Activated CD8-positive, alpha-beta memory T cell treated with anti-CD3 and anti-CD28 coated beads, Interleukin-2, amount 10 ng/mL, durations not matched to agents 7 days and 5 days (primary cell): ENCODE measurements at regions of chr15 and their contacts with region 1.

Region 1: GRCh38 chr15:65184868-65185738 is at the start of gene CLPX:
- DNase-seq: peak; percentile 93
- ATAC-seq: peak; percentile 93
- H3K4me3 Mint-ChIP-seq: peak within 1 kb of the TSS; percentile 93
- H3K27ac Mint-ChIP-seq: peak within 1 kb of the TSS; percentile 88
- H3K4me1 Mint-ChIP-seq: peaks cover 23% of the 10 kb centered on the region
- H3K27me3 Mint-ChIP-seq: no peaks in the 10 kb centered on the region
- total RNA-seq, gene CLPX: 46.8 to 58.8 TPM

Region 2: DNA sequence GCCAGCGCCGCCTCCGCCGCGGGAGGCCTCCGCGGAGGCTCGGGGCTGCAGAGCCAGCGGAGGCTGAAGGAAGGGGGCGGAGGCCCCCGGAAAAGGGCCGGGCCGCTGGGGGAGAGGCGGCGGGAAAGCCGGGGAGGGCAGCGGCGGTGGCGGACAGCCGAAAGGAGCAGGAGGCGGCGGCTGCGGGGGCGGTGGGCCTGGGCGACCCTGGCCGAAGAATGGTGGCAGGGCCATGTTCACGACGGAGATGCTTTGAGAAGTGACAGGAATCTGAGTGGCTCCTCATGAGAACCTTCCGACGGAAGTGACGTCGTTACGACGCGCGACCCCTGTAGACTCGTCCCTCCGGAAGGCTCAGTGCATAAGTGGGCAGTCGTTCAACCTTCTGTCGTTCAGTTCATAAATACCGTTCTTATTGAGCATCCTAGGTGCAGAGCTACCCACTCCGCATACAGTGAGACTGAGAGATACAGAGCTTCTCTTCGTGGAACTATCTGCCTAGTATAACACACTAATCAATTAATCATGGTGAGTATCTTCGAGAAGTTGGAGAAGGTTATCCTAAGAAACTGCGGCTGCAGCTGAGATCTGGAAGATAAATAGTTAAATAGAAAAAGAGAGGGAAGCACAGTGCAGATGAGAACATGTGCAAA is 51.4 kb before region 1 on chr15 and contains the start of gene PDCD7:
- CTCF ChIA-PET with region 1: no interaction called
- DNase-seq: peak; percentile 92
- ATAC-seq: peak; percentile 96
- H3K4me3 Mint-ChIP-seq: peak within 1 kb of the TSS; percentile 87
- H3K27ac Mint-ChIP-seq: peak within 1 kb of the TSS; percentile 89
- H3K4me1 Mint-ChIP-seq: peaks cover 27% of the 10 kb centered on the region
- H3K27me3 Mint-ChIP-seq: no peaks in the 10 kb centered on the region
- total RNA-seq, gene PDCD7: 40.0 to 40.2 TPM

Region 3: DNA sequence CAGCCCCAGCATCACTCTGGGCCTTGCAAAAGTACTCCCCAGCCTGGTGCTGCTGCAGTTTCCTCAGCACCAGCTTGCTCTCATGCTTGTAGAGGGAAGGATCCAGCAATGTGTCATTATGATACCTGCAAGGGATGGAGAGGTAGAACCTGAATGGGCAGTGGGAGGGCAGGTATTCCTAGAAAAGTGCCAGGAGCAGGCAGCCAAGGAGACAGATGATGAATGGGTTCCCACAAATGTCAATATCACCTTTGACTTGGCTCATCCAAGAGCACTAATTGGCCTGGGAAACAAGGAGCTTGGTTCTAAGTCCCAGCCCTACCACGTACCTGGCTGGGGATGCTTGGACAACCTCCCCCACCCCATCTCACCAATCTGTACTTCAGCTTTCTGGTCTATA is 16.8 kb after region 1 on chr15:
- CTCF ChIA-PET with region 1: no interaction called
- DNase-seq: no peak
- ATAC-seq: no peak
- H3K4me3 Mint-ChIP-seq: no peak overlapping the region
- H3K27ac Mint-ChIP-seq: no peak overlapping the region
- H3K4me1 Mint-ChIP-seq: no peaks in the 10 kb centered on the region
- H3K27me3 Mint-ChIP-seq: peaks cover 2% of the 10 kb centered on the region

Region 4: GRCh38 chr15:65264863-65265430 is 79.8 kb after region 1 on chr15:
- CTCF ChIA-PET with region 1: no interaction called
- DNase-seq: no peak
- ATAC-seq: no peak
- H3K4me3 Mint-ChIP-seq: no peak overlapping the region
- H3K27ac Mint-ChIP-seq: no peak overlapping the region
- H3K4me1 Mint-ChIP-seq: no peaks in the 10 kb centered on the region
- H3K27me3 Mint-ChIP-seq: no peaks in the 10 kb centered on the region

Region 5: GRCh38 chr15:65298731-65299130 is 113.6 kb after region 1 on chr15:
- CTCF ChIA-PET with region 1: interaction called, 15 read pairs
- DNase-seq: no peak
- ATAC-seq: no peak
- H3K4me3 Mint-ChIP-seq: peak overlapping the region; percentile 73
- H3K27ac Mint-ChIP-seq: peak overlapping the region; percentile 87
- H3K4me1 Mint-ChIP-seq: peaks cover 37% of the 10 kb centered on the region
- H3K27me3 Mint-ChIP-seq: no peaks in the 10 kb centered on the region